PC-9 (cell line): ENCODE measurements at regions of chr2 and their contacts with region 1.

Region 1: DNA sequence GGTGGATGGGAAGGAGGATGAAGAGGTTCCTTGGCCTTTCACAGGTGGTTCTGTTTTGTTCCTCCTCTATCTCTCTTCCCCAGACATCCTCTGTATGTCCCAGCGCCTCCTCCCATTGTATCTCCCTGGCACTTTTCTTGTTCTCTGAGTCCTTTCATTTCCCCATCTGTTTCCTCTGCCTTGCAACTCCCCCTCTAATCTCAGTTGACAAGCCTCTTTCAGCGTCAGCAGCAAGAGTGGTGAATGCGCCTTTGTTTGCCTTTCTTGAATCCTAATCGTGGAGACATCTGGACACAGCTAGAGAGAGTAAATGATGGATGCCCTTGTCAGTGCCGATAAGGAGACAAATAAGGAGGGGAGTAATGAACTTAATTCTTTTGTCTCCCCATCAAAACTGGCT is 167.0 kb downstream of the NDUFA10 start:
- DNase-seq: no peak
- H3K4me3 ChIP-seq: no peak overlapping the region
- H3K27ac ChIP-seq: no peak overlapping the region
- H3K4me1 ChIP-seq: no peaks in the 10 kb centered on the region
- H3K27me3 ChIP-seq: peaks cover 73% of the 10 kb centered on the region
- CTCF ChIP-seq: no peak

Region 2: GRCh38 chr2:239791526-239792404 is 66.4 kb before region 1 on chr2:
- CTCF ChIA-PET with region 1: no interaction called
- POLR2A ChIA-PET with region 1: no interaction called
- intact Hi-C with region 1: no loop called
- DNase-seq: no peak
- H3K4me3 ChIP-seq: no peak overlapping the region
- H3K27ac ChIP-seq: no peak overlapping the region
- H3K4me1 ChIP-seq: no peaks in the 10 kb centered on the region
- H3K27me3 ChIP-seq: peaks cover 92% of the 10 kb centered on the region
- CTCF ChIP-seq: no peak

Region 3: DNA sequence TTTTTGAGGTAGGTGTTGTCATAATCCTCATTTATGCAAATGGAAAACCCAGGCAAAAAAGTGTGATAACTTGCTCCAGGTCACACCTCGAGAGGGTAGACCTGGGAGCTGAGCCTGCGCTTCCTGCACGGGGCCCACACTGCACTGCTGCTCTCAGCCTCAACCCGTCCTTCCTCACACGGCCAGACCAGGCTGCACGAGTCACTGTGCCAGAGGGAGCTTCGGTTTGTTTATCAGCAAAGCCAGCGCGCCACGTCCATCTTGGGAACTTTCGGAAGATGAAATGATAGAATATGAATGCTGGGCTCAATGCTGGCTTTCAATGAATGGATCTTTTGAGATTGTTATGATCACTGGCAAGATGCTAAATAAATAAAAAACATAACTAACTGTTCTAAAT is 263.5 kb after region 1 on chr2:
- CTCF ChIA-PET with region 1: no interaction called
- POLR2A ChIA-PET with region 1: interaction called, 11 read pairs
- intact Hi-C with region 1: no loop called
- DNase-seq: no peak
- H3K4me3 ChIP-seq: no peak overlapping the region
- H3K27ac ChIP-seq: no peak overlapping the region
- H3K4me1 ChIP-seq: no peaks in the 10 kb centered on the region
- H3K27me3 ChIP-seq: peaks cover 50% of the 10 kb centered on the region
- CTCF ChIP-seq: no peak